ENCODE measurements at regions of chr17 and their contacts with region 1.

Region 1: GRCh38 chr17:30124273-30124796 is 7.7 kb downstream of the NSRP1 start:
- DNase-seq: no peak
- H3K4me3 ChIP-seq: no peak overlapping the region
- H3K27ac ChIP-seq: no peak overlapping the region
- H3K4me1 ChIP-seq: peaks cover 2% of the 10 kb centered on the region
- H3K27me3 ChIP-seq: no peaks in the 10 kb centered on the region
- CTCF ChIP-seq: no peak
- EP300 ChIP-seq: no peak
- POLR2A ChIP-seq: no peak

Region 2: DNA sequence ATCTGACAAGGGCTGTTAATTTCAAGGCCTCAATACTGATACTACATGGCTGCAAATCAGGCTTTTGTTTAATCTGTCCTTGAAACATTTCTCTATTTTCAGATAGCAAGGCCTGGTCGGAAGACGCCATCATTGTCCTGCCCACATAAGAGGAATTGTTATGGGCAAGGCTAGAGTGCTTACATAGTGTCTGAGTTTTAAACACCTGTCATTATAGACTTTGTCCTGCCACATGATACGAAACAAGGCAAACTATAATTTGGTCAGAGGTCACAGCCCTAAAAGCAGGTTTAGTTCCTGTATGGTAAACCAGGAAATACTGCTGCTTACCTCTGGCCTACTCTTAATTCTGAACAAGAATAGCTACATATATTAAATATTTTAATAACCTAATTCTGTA is 298.7 kb before region 1 on chr17:
- intact Hi-C with region 1: no loop called
- DNase-seq: no peak
- H3K4me3 ChIP-seq: no peak overlapping the region
- H3K27ac ChIP-seq: no peak overlapping the region
- H3K4me1 ChIP-seq: no peaks in the 10 kb centered on the region
- H3K27me3 ChIP-seq: no peaks in the 10 kb centered on the region
- CTCF ChIP-seq: no peak
- EP300 ChIP-seq: no peak
- POLR2A ChIP-seq: no peak

Region 3: GRCh38 chr17:30477083-30477773 is 352.9 kb after region 1 on chr17 and contains the start of gene GOSR1:
- intact Hi-C with region 1: loop called in 1 of 4 experiments (anchors 10 kb)
- DNase-seq: peak; percentile 88 to 93 (median 90)
- H3K4me3 ChIP-seq: peak within 1 kb of the TSS; percentile 58
- H3K27ac ChIP-seq: peak within 1 kb of the TSS; percentile 83 to 93
- H3K4me1 ChIP-seq: peaks cover 2% of the 10 kb centered on the region
- H3K27me3 ChIP-seq: no peaks in the 10 kb centered on the region
- CTCF ChIP-seq: peak; percentile 63 to 72 (median 71)
- EP300 ChIP-seq: no peak
- POLR2A ChIP-seq: no peak
- total RNA-seq, gene GOSR1: 26.1 to 61.1 (median 53.9) TPM